Activated T-helper 1 cell treated with anti-CD3 and anti-CD28 coated beads, Interleukin-12 subunit alpha, Interleukin-12 subunit beta, Interleukin-2, Interleukin-4 antibody, amounts not matched to agents 30 ng/mL and 10 ng/mL and 1 ng/mL, durations not matched to agents 14 hours and 24 hours and 36 hours (primary cell): ENCODE measurements at regions of chr10 and their contacts with region 1.

Region 1: GRCh38 chr10:73625884-73626752 is 15.2 kb downstream of the MYOZ1 start:
- DNase-seq: peak; percentile 90
- H3K4me3 Mint-ChIP-seq: peak overlapping the region; percentile 94
- H3K27ac Mint-ChIP-seq: peak overlapping the region; percentile 95
- H3K4me1 Mint-ChIP-seq: peaks cover 17% of the 10 kb centered on the region
- H3K27me3 Mint-ChIP-seq: no peaks in the 10 kb centered on the region

Region 2: DNA sequence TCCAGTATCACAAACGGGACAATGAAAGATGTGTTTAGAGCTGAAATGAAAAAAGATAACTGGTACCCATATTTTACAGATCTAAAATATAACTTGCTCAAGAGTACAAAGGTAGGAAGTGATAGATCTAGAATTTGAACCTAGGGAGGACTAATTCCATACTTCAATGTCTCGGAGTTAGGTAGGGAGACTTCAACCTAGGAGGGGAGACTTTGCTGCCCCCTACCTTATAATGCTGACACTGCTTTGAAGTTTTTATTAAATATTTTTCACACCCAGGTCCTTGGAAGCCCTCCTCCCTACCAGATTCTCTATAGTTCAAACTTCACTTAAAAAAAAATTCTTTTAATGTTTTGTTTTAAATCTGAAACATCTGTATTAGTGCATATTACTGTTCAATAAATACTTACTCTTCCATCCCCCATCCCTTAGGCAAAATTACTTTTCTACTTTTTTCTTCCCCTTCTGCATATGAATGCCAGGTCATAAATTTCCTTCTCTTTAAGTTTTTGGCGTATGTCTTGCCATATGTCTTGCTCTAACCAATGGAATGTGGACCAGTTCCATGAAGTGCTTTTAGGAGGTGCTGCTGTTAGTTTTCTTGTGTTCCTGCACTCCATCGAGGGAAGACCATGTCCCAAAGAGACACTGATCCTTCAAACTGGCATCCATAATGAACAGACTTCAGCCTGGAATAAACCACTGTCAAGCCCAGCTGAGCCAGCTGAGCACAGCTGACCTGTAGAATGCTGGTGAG is 1058.1 kb before region 1 on chr10:
- intact Hi-C with region 1: no loop called
- DNase-seq: no peak
- H3K4me3 Mint-ChIP-seq: no peak overlapping the region
- H3K27ac Mint-ChIP-seq: no peak overlapping the region
- H3K4me1 Mint-ChIP-seq: peaks cover 28% of the 10 kb centered on the region
- H3K27me3 Mint-ChIP-seq: no peaks in the 10 kb centered on the region

Region 3: GRCh38 chr10:73167783-73168464 is 458.2 kb before region 1 on chr10 and contains the starts of genes ECD and FAM149B1:
- intact Hi-C with region 1: loop called (anchors 1 kb)
- DNase-seq: peak; percentile 91
- H3K4me3 Mint-ChIP-seq: peak within 1 kb of the TSS; percentile 99
- H3K27ac Mint-ChIP-seq: peak within 1 kb of the TSS; percentile 99
- H3K4me1 Mint-ChIP-seq: peaks cover 42% of the 10 kb centered on the region
- H3K27me3 Mint-ChIP-seq: no peaks in the 10 kb centered on the region
- total RNA-seq, gene ECD: 38.0 and 39.5 TPM in 2 replicates
- total RNA-seq, gene FAM149B1: 11.1 and 11.3 TPM in 2 replicates

Region 4: DNA sequence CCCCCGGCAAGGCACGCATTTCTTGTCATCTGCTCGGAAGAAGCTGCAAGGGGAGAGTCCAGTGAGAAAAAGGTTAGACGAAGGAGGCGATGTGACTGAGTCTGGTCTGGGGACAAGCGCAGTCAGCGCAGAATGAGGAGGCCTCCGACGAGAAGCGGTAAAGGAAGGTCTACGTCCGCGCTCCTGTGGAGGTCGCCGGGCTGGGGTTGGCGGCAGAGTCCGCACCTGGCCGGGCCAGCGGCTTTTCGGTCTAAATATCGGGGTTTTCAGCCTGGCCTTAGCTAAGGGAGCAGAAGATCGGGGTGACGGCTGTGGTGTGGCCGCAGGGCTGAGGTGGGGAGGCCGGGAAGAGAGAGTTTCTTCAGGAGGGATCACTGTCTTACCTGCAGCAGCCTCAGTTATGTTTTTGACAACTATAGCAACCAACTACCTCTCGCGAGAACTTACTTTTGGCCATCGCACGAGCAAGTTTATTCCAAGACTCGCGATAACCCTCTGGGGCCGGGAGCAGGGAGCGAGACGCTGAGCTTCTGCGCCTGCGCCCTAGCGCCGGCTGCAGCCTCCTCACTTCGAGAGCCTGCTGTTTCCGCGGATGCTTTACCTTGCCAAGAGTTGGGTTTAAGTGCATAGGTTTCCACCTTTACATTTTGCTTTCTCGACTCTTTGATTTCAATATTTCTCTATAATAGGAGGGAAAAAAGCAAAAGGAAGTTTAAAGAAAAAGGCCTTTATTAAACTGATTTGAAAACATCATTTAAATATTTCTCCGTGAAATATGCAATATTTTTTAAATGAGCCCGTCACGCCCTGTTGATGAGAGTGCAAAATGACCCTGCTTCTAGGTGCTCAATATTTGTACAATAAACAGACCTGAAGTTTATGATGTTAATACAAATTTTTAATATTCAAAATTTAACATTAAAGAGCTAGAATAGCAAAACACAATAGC is 267.5 kb before region 1 on chr10 and contains the start of gene CFAP70:
- intact Hi-C with region 1: loop called (anchors 5 kb)
- DNase-seq: peak; percentile 90
- H3K4me3 Mint-ChIP-seq: peak within 1 kb of the TSS; percentile 93
- H3K27ac Mint-ChIP-seq: peak within 1 kb of the TSS; percentile 86
- H3K4me1 Mint-ChIP-seq: peaks cover 20% of the 10 kb centered on the region
- H3K27me3 Mint-ChIP-seq: peaks cover 8% of the 10 kb centered on the region
- total RNA-seq, gene CFAP70: 0.26 and 0.34 TPM in 2 replicates

Region 5: GRCh38 chr10:73644015-73644743 is 18.1 kb after region 1 on chr10:
- intact Hi-C with region 1: loop called (anchors 1 kb)
- DNase-seq: peak; percentile 24
- H3K4me3 Mint-ChIP-seq: peak overlapping the region; percentile 11
- H3K27ac Mint-ChIP-seq: peak overlapping the region; percentile 2
- H3K4me1 Mint-ChIP-seq: peaks cover 23% of the 10 kb centered on the region
- H3K27me3 Mint-ChIP-seq: peaks cover 15% of the 10 kb centered on the region

Region 6: GRCh38 chr10:73772280-73773151 is 146.4 kb after region 1 on chr10:
- intact Hi-C with region 1: loop called (anchors 5 kb)
- DNase-seq: peak; percentile 85
- H3K4me3 Mint-ChIP-seq: peak overlapping the region; percentile 94
- H3K27ac Mint-ChIP-seq: peak overlapping the region; percentile 91
- H3K4me1 Mint-ChIP-seq: peaks cover 67% of the 10 kb centered on the region
- H3K27me3 Mint-ChIP-seq: no peaks in the 10 kb centered on the region

Region 7: GRCh38 chr10:73803680-73804286 is 177.7 kb after region 1 on chr10:
- intact Hi-C with region 1: no loop called
- DNase-seq: peak; percentile 6
- H3K4me3 Mint-ChIP-seq: peak overlapping the region; percentile 58
- H3K27ac Mint-ChIP-seq: peak overlapping the region; percentile 89
- H3K4me1 Mint-ChIP-seq: peaks cover 43% of the 10 kb centered on the region
- H3K27me3 Mint-ChIP-seq: no peaks in the 10 kb centered on the region

Region 8: GRCh38 chr10:73997787-73998622 is 371.9 kb after region 1 on chr10 and contains the start of gene VCL:
- intact Hi-C with region 1: loop called (anchors 10 kb)
- DNase-seq: peak; percentile 95
- H3K4me3 Mint-ChIP-seq: peak within 1 kb of the TSS; percentile 98
- H3K27ac Mint-ChIP-seq: peak within 1 kb of the TSS; percentile 100
- H3K4me1 Mint-ChIP-seq: peaks cover 59% of the 10 kb centered on the region
- H3K27me3 Mint-ChIP-seq: no peaks in the 10 kb centered on the region
- total RNA-seq, gene VCL: 24.4 and 26.0 TPM in 2 replicates

Region 9: DNA sequence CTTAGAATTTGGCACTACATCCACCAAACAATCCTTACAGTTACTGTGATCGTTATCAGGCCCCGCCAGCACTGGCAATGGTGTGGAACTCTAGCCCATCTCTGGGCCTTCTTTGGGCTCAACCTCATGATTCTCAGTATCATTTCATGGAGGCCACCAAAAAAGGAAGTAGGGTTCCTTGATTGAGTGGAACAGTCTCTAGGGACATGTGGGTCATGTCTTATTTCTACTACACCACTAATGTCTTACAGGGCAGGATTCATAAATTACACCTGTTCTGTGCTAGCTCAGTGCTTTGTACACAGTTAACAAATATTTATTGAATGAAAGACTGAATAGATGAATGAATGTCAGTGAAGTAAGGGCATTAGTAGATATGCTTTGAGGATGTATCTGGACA is 470.7 kb after region 1 on chr10:
- intact Hi-C with region 1: no loop called
- DNase-seq: no peak
- H3K4me3 Mint-ChIP-seq: no peak overlapping the region
- H3K27ac Mint-ChIP-seq: peak overlapping the region; percentile 11
- H3K4me1 Mint-ChIP-seq: peaks cover 9% of the 10 kb centered on the region
- H3K27me3 Mint-ChIP-seq: no peaks in the 10 kb centered on the region